CD4-positive, alpha-beta memory T cell (primary cell): ENCODE measurements at regions of chrX and their contacts with region 1.

Region 1: GRCh38 chrX:3713225-3713936 is at the start of gene PRKX:
- DNase-seq: peak; percentile 74 to 88 (median 83)
- H3K4me3 ChIP-seq: peak within 1 kb of the TSS; percentile 77 to 78
- H3K4me3 Mint-ChIP-seq: peak within 1 kb of the TSS; percentile 96 to 100 (median 98)
- H3K27ac ChIP-seq: peak within 1 kb of the TSS; percentile 60
- H3K27ac Mint-ChIP-seq: peak within 1 kb of the TSS; percentile 88 to 98 (median 97)
- H3K4me1 ChIP-seq: peaks cover 27% of the 10 kb centered on the region
- H3K4me1 Mint-ChIP-seq: peaks cover 4 to 39% (median 20%) of the 10 kb centered on the region in 4 donors
- H3K27me3 ChIP-seq: no peaks in the 10 kb centered on the region
- H3K27me3 Mint-ChIP-seq: no peaks in the 10 kb centered on the region
- total RNA-seq, gene PRKX: 66.7 to 70.2 TPM

Region 2: GRCh38 chrX:3697701-3698279 is 15.6 kb before region 1 on chrX:
- CTCF ChIA-PET with region 1: interaction called, 9 read pairs
- POLR2A ChIA-PET with region 1: interaction called, 16 read pairs
- intact Hi-C with region 1: loop called (anchors 1 kb)
- DNase-seq: no peak
- H3K4me3 ChIP-seq: no peak overlapping the region
- H3K4me3 Mint-ChIP-seq: peak overlapping the region in 3 of 8 donors; percentile 29 to 53 (median 41)
- H3K27ac ChIP-seq: no peak overlapping the region
- H3K27ac Mint-ChIP-seq: peak overlapping the region in 4 of 7 donors; percentile 46 to 57 (median 55)
- H3K4me1 ChIP-seq: peaks cover 48% of the 10 kb centered on the region
- H3K4me1 Mint-ChIP-seq: peaks cover 36 to 87% (median 56%) of the 10 kb centered on the region in 4 donors
- H3K27me3 ChIP-seq: no peaks in the 10 kb centered on the region
- H3K27me3 Mint-ChIP-seq: no peaks in the 10 kb centered on the region

Region 3: GRCh38 chrX:3748052-3748559 is 34.7 kb after region 1 on chrX:
- CTCF ChIA-PET with region 1: no interaction called
- POLR2A ChIA-PET with region 1: interaction called, 9 read pairs
- intact Hi-C with region 1: loop called (anchors 5 kb)
- DNase-seq: peak in 4 of 5 donors; percentile 15 to 51 (median 25)
- H3K4me3 ChIP-seq: no peak overlapping the region
- H3K4me3 Mint-ChIP-seq: peak overlapping the region in 5 of 8 donors; percentile 8 to 54 (median 36)
- H3K27ac ChIP-seq: no peak overlapping the region
- H3K27ac Mint-ChIP-seq: peak overlapping the region in 5 of 7 donors; percentile 19 to 89 (median 63)
- H3K4me1 ChIP-seq: peaks cover 28% of the 10 kb centered on the region
- H3K4me1 Mint-ChIP-seq: peaks cover 25 to 55% (median 37%) of the 10 kb centered on the region in 4 donors
- H3K27me3 ChIP-seq: no peaks in the 10 kb centered on the region
- H3K27me3 Mint-ChIP-seq: no peaks in the 10 kb centered on the region

Region 4: GRCh38 chrX:3811331-3812311 is 98.2 kb after region 1 on chrX:
- CTCF ChIA-PET with region 1: interaction called, 4 read pairs
- POLR2A ChIA-PET with region 1: interaction called, 5 read pairs
- intact Hi-C with region 1: loop called (anchors 1 kb)
- DNase-seq: peak; percentile 48 to 75 (median 70)
- H3K4me3 ChIP-seq: no peak overlapping the region
- H3K4me3 Mint-ChIP-seq: peak overlapping the region; percentile 21 to 83 (median 75)
- H3K27ac ChIP-seq: no peak overlapping the region
- H3K27ac Mint-ChIP-seq: peak overlapping the region; percentile 33 to 87 (median 54)
- H3K4me1 ChIP-seq: peaks cover 12% of the 10 kb centered on the region
- H3K4me1 Mint-ChIP-seq: peaks cover 5 to 34% (median 16%) of the 10 kb centered on the region in 4 donors
- H3K27me3 ChIP-seq: no peaks in the 10 kb centered on the region
- H3K27me3 Mint-ChIP-seq: peaks cover 2 to 6% of the 10 kb centered on the region in 2 donors